PC-9 (cell line): ENCODE measurements at regions of chr16 and their contacts with region 1.

Region 1: DNA sequence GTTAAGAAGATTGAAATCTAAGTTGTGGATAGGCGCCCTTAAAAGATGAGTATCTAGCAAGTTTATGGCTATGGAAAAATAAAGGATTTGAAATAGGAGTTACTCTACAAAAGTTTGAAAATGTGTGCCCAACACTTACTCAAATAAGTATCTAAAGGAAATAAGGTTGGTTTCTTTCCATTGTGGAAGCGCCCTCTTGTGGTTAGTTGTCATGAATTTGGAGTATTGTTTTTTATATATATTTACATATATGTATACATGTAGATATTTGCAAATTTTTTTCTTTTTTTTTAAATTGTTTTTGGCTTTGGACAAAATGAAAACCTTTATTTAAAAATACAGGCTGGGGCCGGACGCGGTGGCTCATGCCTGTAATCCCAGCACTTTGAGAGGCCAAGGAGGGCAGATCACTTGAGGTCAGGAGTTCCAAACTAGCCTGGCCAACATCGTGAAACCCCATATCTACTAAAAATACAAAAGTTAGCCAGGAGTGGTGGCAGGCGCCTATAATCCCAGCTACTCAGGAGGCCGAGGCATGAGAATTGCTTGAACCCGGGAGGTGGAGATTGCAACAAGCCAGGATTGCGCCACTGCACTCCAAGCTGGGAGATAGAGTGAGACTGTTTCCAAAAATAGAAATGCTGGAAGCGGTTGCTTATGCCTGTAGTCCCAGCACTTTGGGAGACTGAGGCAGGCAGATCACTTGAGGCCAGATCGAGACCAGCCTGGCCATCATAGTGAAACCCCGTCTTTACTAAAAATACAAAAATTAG is 24.0 kb upstream of the VPS4A start:
- DNase-seq: peak; percentile 6 to 51
- H3K4me3 ChIP-seq: no peak overlapping the region
- H3K27ac ChIP-seq: no peak overlapping the region
- H3K4me1 ChIP-seq: no peaks in the 10 kb centered on the region
- H3K27me3 ChIP-seq: no peaks in the 10 kb centered on the region
- CTCF ChIP-seq: peak; percentile 75

Region 2: DNA sequence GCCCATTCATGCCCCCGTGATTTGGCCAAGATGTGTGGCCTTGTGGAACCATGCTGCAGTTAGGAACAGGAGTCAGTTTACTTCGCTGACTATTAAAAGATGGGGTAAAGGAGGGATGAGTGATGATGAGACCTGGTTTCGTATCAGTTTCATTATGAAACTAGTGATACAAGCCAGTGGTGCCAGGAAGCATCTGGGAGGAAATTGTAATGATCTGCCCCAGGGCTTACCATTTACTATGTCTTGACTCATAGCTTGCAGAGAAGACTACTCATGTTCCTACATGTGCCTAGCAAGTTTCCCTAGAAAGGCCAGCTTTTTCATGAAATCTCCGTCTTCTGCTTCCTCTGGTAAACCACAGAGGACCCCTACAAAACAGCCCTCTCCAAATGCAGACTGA is 618.9 kb before region 1 on chr16:
- CTCF ChIA-PET with region 1: interaction called, 13 read pairs
- POLR2A ChIA-PET with region 1: no interaction called
- intact Hi-C with region 1: no loop called
- DNase-seq: peak in 1 of 2 experiments; percentile 76
- H3K4me3 ChIP-seq: no peak overlapping the region
- H3K27ac ChIP-seq: peak overlapping the region; percentile 75
- H3K4me1 ChIP-seq: peaks cover 43% of the 10 kb centered on the region
- H3K27me3 ChIP-seq: no peaks in the 10 kb centered on the region
- CTCF ChIP-seq: no peak

Region 3: DNA sequence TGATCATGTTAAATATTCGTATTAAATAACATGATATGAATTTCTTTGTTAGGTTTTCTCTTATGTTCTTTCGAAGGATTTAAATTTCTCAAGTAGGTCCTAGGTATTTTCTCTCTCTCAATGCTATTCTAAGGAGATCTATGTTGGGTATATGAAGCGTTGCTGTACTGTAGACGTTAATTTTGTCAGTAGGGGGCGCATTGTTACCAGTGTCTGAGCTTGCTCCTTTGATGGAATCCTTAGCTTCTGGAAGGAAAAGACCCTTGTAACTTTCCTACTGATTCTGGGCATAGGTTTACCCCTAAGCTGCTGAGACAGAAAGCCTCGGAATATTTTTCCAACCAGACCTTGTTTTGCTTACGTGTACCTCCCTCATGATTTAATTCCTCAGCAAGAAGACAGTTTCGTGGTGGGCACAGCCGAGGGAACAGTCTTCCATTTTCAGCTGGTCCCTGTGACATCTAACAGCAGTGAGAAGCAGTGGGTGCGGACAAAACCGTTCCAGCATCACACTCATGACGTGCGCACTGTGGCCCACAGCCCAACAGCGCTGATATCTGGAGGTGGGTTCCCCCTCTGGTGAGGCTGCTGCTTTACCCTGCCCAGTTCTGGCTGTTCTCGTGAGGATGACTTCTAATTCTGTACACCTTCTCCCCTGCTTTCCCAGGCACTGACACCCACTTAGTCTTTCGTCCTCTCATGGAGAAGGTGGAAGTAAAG is 136.8 kb before region 1 on chr16:
- CTCF ChIA-PET with region 1: interaction called, 5 read pairs
- POLR2A ChIA-PET with region 1: no interaction called
- intact Hi-C with region 1: loop called (anchors 1 kb)
- DNase-seq: peak; percentile 34 to 53
- H3K4me3 ChIP-seq: no peak overlapping the region
- H3K27ac ChIP-seq: no peak overlapping the region
- H3K4me1 ChIP-seq: no peaks in the 10 kb centered on the region
- H3K27me3 ChIP-seq: no peaks in the 10 kb centered on the region
- CTCF ChIP-seq: peak; percentile 87

Region 4: DNA sequence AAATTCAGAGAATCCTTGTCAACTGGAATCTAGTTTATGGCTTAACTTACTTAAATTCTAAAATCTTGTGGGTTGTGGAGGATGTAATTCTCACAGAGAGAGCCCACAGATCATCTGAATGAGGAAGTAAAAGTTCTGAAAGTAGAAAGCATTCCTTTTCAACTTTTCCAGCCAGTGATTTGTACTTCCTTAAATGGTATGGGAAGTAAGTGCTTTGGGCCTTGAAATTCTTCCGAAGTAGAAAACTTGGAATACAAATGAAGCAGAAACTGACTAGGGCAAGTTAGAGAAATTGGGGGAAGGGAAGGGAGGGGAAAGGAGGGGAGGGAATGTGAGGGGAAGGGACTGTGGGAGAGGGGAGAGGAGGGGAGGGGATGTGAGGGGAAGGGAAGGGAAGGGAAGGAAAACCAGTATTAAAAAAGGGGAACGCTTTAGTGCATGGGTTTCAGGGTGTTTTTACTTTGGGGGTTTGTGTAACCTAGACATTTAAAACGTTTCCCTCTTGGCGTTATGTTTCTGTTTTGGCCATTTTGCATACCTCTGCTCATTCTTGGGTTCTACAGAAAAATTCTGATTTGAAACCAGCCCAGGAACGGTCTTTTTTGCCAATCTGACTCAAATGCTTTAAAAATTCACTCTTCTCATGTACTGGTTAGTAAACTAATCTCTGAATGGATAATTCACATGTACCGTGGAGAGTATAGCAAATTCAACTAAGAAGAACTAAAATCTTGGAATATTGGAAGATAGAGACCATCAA is 115.6 kb before region 1 on chr16:
- CTCF ChIA-PET with region 1: no interaction called
- POLR2A ChIA-PET with region 1: no interaction called
- intact Hi-C with region 1: loop called (anchors 1 kb)
- DNase-seq: no peak
- H3K4me3 ChIP-seq: no peak overlapping the region
- H3K27ac ChIP-seq: no peak overlapping the region
- H3K4me1 ChIP-seq: peaks cover 17% of the 10 kb centered on the region
- H3K27me3 ChIP-seq: no peaks in the 10 kb centered on the region
- CTCF ChIP-seq: no peak

Region 5: GRCh38 chr16:69217433-69217832 is 69.7 kb before region 1 on chr16:
- CTCF ChIA-PET with region 1: interaction called, 13 read pairs
- POLR2A ChIA-PET with region 1: no interaction called
- intact Hi-C with region 1: no loop called
- DNase-seq: peak in 1 of 2 experiments; percentile 85
- H3K4me3 ChIP-seq: no peak overlapping the region
- H3K27ac ChIP-seq: peak overlapping the region; percentile 40
- H3K4me1 ChIP-seq: peaks cover 46% of the 10 kb centered on the region
- H3K27me3 ChIP-seq: no peaks in the 10 kb centered on the region
- CTCF ChIP-seq: no peak

Region 6: DNA sequence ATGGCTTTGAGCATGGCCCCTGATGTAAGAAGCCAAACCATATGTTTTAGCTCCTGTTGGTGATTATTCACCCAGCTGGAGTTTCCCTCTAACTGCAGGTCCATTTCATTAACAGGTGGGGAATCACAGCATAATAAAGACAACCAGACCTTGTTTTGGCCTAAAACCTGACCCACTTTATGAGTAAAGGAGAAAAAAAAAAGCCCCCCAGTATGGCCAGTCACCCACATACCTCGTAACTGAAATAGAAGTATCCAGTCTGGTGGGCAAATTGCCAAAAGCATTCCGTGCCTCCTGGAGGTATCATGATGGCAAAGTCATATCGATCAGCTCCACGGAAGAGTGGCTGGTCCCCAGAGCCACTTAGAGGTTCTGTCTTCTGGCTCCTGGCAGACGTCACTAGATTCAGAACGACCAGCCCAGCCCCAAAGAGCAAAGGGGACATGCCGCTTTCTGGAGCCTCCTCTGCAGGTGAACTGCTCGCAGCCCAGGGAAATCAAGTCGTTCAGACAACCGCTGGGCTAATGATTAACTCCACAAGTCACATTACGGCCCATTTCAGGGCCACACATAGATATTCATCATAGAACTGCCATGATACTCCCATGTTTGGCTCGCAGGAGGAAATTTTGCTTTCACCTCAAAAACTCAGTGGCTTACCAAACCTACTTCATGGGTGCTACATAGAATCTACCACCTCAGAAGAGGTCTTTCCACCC is 64.3 kb after region 1 on chr16 and contains the start of gene TMED6:
- CTCF ChIA-PET with region 1: no interaction called
- POLR2A ChIA-PET with region 1: no interaction called
- intact Hi-C with region 1: no loop called
- DNase-seq: no peak
- H3K4me3 ChIP-seq: no peak within 1 kb of the TSS
- H3K27ac ChIP-seq: no peak within 1 kb of the TSS
- H3K4me1 ChIP-seq: no peaks in the 10 kb centered on the region
- H3K27me3 ChIP-seq: no peaks in the 10 kb centered on the region
- CTCF ChIP-seq: no peak
- total RNA-seq, gene TMED6: 0.59 TPM in 1 of 2 replicates, not detected in the other

Region 7: GRCh38 chr16:69513188-69513961 is 226.2 kb after region 1 on chr16:
- CTCF ChIA-PET with region 1: interaction called, 14 read pairs
- POLR2A ChIA-PET with region 1: no interaction called
- intact Hi-C with region 1: no loop called
- DNase-seq: peak; percentile 89 to 99
- H3K4me3 ChIP-seq: peak overlapping the region; percentile 25; the same call in 1 of the 2 replicates
- H3K27ac ChIP-seq: peak overlapping the region; percentile 100
- H3K4me1 ChIP-seq: peaks cover 44% of the 10 kb centered on the region
- H3K27me3 ChIP-seq: no peaks in the 10 kb centered on the region
- CTCF ChIP-seq: no peak